Pancreas (tissue), 10 donors: ENCODE measurements at regions of chr12 and their contacts with region 1.

Region 1: GRCh38 chr12:57904848-57905811 is 36.2 kb upstream of the ATP23 start:
- DNase-seq: peak; percentile 77 to 92 (median 86)
- ATAC-seq: peak; percentile 94 to 100 (median 100)
- H3K4me3 ChIP-seq: no peak overlapping the region
- H3K27ac ChIP-seq: no peak overlapping the region
- H3K4me1 ChIP-seq: no peaks in the 10 kb centered on the region
- H3K27me3 ChIP-seq: no peaks in the 10 kb centered on the region
- CTCF ChIP-seq: peak; percentile 99 to 100 (median 100)

Region 2: GRCh38 chr12:57803319-57803893 is 101.7 kb before region 1 on chr12:
- intact Hi-C with region 1: loop called in 1 of 3 experiments (anchors 10 kb)
- DNase-seq: peak; percentile 37 to 78 (median 57)
- ATAC-seq: peak; percentile 60 to 98 (median 92)
- H3K4me3 ChIP-seq: no peak overlapping the region
- H3K27ac ChIP-seq: no peak overlapping the region
- H3K4me1 ChIP-seq: no peaks in the 10 kb centered on the region
- H3K27me3 ChIP-seq: no peaks in the 10 kb centered on the region
- CTCF ChIP-seq: peak; percentile 43 to 59 (median 54)

Region 3: DNA sequence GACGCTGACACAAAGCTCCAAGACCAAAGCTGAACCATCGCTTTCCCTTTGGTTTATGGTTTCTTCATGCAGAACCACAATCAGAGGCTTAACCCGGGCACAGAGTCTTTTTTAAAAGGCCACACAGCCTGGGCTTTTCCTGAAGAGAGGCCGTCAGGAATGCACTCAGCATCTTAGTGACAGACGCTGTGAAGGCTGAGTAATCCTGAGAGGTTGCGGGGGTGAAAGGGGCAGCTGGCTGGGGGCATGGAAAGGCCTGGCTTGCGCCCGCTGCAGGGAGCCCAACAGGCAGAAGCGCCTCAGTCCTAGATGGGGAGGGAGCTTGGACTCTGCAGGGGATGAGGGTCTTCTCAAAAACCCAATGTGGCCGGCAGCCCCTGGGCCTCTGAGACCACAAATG is 72.2 kb before region 1 on chr12:
- intact Hi-C with region 1: loop called in 2 of 3 experiments (anchors 5 kb)
- DNase-seq: no peak
- ATAC-seq: no peak
- H3K4me3 ChIP-seq: no peak overlapping the region
- H3K27ac ChIP-seq: peak overlapping the region in 1 of 4 donors; percentile 37
- H3K4me1 ChIP-seq: peaks cover 61 to 73% (median 66%) of the 10 kb centered on the region in 3 donors
- H3K27me3 ChIP-seq: no peaks in the 10 kb centered on the region
- CTCF ChIP-seq: no peak

Region 4: GRCh38 chr12:57952766-57953165 is 47.6 kb after region 1 on chr12:
- intact Hi-C with region 1: no loop called
- DNase-seq: no peak
- ATAC-seq: no peak
- H3K4me3 ChIP-seq: no peak overlapping the region
- H3K27ac ChIP-seq: no peak overlapping the region
- H3K4me1 ChIP-seq: no peaks in the 10 kb centered on the region
- H3K27me3 ChIP-seq: no peaks in the 10 kb centered on the region
- CTCF ChIP-seq: no peak

Region 5: DNA sequence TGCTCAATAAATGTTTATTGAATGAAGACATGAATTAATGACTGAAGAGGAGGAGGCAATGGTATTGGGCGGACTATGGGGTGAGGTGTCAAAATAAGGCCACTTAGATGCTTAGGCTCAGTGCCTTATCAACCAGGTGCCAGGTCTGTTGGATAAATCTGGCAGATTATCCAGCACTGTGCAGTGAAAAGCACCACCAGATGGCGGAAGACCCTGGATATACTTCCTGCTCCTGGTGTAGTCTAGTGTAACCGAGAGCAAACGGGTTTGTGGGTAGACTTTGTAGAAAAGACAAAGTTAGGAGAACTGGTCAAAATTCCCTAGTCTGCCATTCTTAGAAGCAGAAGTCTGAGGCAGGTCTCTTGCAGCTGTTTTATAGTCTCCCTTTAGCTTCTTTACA is 342.5 kb after region 1 on chr12:
- intact Hi-C with region 1: no loop called
- DNase-seq: no peak
- ATAC-seq: no peak
- H3K4me3 ChIP-seq: no peak overlapping the region
- H3K27ac ChIP-seq: no peak overlapping the region
- H3K4me1 ChIP-seq: no peaks in the 10 kb centered on the region
- H3K27me3 ChIP-seq: no peaks in the 10 kb centered on the region
- CTCF ChIP-seq: no peak

Region 6: GRCh38 chr12:58443273-58443980 is 538.3 kb after region 1 on chr12:
- intact Hi-C with region 1: no loop called
- DNase-seq: no peak
- ATAC-seq: peak in 1 of 4 donors; percentile 36
- H3K4me3 ChIP-seq: no peak overlapping the region
- H3K27ac ChIP-seq: no peak overlapping the region
- H3K4me1 ChIP-seq: no peaks in the 10 kb centered on the region
- H3K27me3 ChIP-seq: no peaks in the 10 kb centered on the region
- CTCF ChIP-seq: no peak